Kidney (tissue), 22 donors: ENCODE measurements at regions of chr5 and their contacts with region 1.

Region 1: DNA sequence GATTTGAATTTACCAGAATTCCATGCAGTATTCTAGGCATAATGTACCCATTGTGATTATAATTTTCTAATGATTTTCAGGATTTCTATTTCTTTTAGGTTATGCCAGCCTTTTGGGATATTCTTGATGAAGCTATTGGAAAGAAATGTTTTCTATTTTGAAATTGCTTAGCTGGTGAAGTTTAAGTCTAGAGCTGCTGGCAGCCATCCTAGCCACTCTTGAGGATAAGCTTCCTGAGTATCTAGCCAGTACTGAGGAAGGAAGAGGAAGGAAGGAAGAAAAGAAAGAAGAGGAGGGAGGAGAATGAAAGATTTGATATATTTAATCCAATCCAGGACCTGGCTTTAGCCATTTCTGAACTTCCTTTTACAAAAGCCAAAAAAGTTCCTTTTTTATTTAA is 142.1 kb upstream of the DAB2 start:
- DNase-seq: no peak
- H3K4me3 ChIP-seq: no peak overlapping the region
- H3K27ac ChIP-seq: no peak overlapping the region
- H3K4me1 ChIP-seq: peaks cover 0 to 20% (median 3%) of the 10 kb centered on the region in 3 donors
- H3K27me3 ChIP-seq: no peaks in the 10 kb centered on the region
- CTCF ChIP-seq: no peak

Region 2: DNA sequence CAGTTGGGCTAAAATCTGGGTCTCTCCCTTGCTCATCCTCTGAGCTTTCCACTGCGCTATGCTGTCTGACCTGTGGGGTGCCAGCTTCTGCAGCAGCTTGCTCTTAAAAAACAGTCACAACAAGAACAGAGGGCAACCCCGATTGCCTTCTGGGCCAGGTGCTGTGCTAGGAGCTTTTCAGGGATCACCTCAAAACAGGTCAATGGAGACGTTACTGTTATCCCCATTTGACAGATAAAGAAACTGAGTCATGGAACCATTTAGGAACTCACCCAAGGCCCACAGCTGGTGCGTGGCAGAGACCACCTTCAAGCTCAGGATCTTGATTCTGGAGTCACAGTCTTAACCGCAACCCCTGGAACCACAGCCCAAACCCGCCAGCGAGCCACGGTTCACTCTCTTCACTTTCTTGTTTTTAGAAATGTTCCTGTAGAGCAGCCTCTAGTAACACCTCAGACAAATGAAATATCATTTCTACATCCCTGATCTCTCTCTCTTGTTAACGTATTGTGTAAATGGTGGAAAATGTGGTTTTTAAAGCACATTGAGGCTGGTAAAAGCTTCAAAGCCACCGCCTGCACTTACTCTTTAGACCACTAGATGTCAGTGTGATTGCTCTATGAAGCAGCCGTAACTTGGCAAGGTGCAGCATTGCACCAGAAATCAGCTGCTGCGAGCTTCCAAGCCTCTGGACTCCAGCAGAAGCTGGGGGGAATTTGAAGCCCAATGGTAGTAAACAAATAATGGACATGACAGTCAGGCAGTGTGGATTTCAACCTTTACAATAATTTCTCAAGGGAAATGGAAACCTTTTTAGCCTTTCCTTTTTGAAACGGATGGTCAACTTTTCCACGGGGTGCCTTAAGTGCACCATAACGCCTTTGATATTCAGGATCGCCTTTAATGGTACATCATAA is 349.3 kb before region 1 on chr5:
- intact Hi-C with region 1: loop called (anchors 5 kb)
- DNase-seq: peak; percentile 72 to 92 (median 81)
- H3K4me3 ChIP-seq: no peak overlapping the region
- H3K27ac ChIP-seq: no peak overlapping the region
- H3K4me1 ChIP-seq: no peaks in the 10 kb centered on the region
- H3K27me3 ChIP-seq: no peaks in the 10 kb centered on the region
- CTCF ChIP-seq: peak; percentile 99

Region 3: GRCh38 chr5:39461026-39461682 is 105.7 kb before region 1 on chr5:
- intact Hi-C with region 1: no loop called
- DNase-seq: no peak
- H3K4me3 ChIP-seq: no peak overlapping the region
- H3K27ac ChIP-seq: no peak overlapping the region
- H3K4me1 ChIP-seq: no peaks in the 10 kb centered on the region
- H3K27me3 ChIP-seq: no peaks in the 10 kb centered on the region
- CTCF ChIP-seq: no peak